Activated CD4-positive, alpha-beta T cell treated with anti-CD3 and anti-CD28 coated beads, Interleukin-2, amount 10 ng/mL, durations not matched to agents 24 days and 14 days (primary cell): ENCODE measurements at regions of chr10 and their contacts with region 1.

Region 1: GRCh38 chr10:77846718-77847630 is 79.6 kb downstream of the DLG5 start:
- DNase-seq: peak; percentile 89
- H3K4me3 Mint-ChIP-seq: no peak overlapping the region
- H3K27ac Mint-ChIP-seq: no peak overlapping the region
- H3K4me1 Mint-ChIP-seq: peaks cover 2% of the 10 kb centered on the region
- H3K27me3 Mint-ChIP-seq: no peaks in the 10 kb centered on the region

Region 2: DNA sequence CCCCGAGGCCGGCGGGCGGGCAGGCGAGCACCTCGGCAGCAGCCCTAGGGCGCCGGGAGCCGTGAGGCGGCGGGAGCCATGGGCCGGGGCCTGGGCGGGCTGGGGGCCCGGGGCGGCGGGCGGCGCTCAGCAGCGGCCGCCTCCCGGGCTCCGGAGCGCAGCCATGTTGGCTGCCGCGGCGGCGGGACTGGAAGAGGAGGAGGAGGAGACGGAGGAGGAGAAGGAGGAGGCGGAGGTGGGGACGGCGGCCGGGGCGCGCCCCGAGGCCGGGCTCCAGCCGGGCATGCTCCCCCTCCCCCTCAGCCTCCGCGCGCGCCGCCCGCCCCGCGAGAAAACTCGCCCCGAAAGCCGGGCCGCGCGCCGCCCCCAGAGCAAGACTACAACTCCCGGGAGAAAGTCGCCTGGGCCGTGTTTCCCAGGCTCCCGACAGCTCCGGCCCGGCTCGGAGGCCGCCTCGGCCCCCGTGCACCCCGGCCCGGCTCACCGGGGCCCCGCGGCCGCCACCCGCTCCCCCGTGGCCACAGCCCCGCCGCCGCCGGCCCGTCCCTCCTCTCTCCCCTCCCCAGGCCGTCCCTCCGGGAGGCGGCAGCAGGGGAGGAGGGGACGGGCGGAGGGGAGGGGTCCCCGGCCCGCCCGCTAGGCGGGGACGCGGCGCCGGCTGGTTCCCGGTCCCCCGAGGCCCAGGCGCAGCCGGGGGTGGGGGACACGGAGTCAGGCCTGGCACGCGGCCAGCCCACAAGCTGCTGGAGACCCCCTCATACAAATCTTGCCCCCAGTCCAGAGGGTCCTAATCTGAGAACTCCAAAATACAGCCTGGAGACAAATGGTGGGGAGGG is 79.8 kb after region 1 on chr10 and contains the start of gene DLG5:
- intact Hi-C with region 1: loop called (anchors 2 kb)
- DNase-seq: peak; percentile 80
- H3K4me3 Mint-ChIP-seq: peak within 1 kb of the TSS; percentile 76
- H3K27ac Mint-ChIP-seq: peak within 1 kb of the TSS; percentile 58
- H3K4me1 Mint-ChIP-seq: peaks cover 7% of the 10 kb centered on the region
- H3K27me3 Mint-ChIP-seq: peaks cover 47% of the 10 kb centered on the region
- total RNA-seq, gene DLG5: 5.2 and 5.4 TPM in 2 replicates

Region 3: GRCh38 chr10:77965294-77965693 is 118.3 kb after region 1 on chr10:
- intact Hi-C with region 1: loop called (anchors 5 kb)
- DNase-seq: no peak
- H3K4me3 Mint-ChIP-seq: no peak overlapping the region
- H3K27ac Mint-ChIP-seq: no peak overlapping the region
- H3K4me1 Mint-ChIP-seq: no peaks in the 10 kb centered on the region
- H3K27me3 Mint-ChIP-seq: no peaks in the 10 kb centered on the region